ENCODE measurements at regions of chr13 and their contacts with region 1.

Region 1: GRCh38 chr13:74575729-74576125 is 441.5 kb upstream of the KLF12 start:
- DNase-seq: no peak
- ATAC-seq: no peak
- H3K4me3 Mint-ChIP-seq: peak overlapping the region; percentile 49
- H3K27ac Mint-ChIP-seq: no peak overlapping the region
- H3K4me1 Mint-ChIP-seq: peaks cover 5% of the 10 kb centered on the region
- H3K27me3 Mint-ChIP-seq: peaks cover 45% of the 10 kb centered on the region
- CTCF ChIP-seq: no peak

Region 2: DNA sequence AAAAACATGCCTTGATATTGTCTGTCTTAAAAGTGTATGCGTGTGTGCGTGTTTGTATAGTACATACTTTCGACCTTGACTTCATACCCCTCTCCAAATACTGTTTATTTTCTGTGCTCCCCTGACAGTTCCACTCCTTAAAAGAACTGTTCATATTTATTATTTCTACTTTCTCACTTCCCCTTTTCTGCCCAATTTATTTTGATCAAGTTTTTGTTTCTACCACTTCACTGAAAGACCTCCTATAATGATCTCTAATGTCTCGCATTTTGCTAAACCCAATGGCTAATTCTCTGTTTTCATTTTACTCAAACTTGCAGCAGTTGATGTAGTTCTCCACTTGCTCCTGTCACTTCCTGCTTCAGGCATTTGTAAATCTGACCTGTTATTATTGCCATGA is 15.4 kb before region 1 on chr13:
- CTCF ChIA-PET with region 1: no interaction called
- POLR2A ChIA-PET with region 1: no interaction called
- intact Hi-C with region 1: loop called (anchors 2 kb)
- DNase-seq: no peak
- ATAC-seq: no peak
- H3K4me3 Mint-ChIP-seq: no peak overlapping the region
- H3K27ac Mint-ChIP-seq: no peak overlapping the region
- H3K4me1 Mint-ChIP-seq: peaks cover 27% of the 10 kb centered on the region
- H3K27me3 Mint-ChIP-seq: no peaks in the 10 kb centered on the region
- CTCF ChIP-seq: no peak

Region 3: GRCh38 chr13:74661851-74662250 is 86.1 kb after region 1 on chr13:
- CTCF ChIA-PET with region 1: no interaction called
- POLR2A ChIA-PET with region 1: no interaction called
- intact Hi-C with region 1: no loop called
- DNase-seq: no peak
- ATAC-seq: no peak
- H3K4me3 Mint-ChIP-seq: no peak overlapping the region
- H3K27ac Mint-ChIP-seq: no peak overlapping the region
- H3K4me1 Mint-ChIP-seq: no peaks in the 10 kb centered on the region
- H3K27me3 Mint-ChIP-seq: no peaks in the 10 kb centered on the region
- CTCF ChIP-seq: no peak

Region 4: DNA sequence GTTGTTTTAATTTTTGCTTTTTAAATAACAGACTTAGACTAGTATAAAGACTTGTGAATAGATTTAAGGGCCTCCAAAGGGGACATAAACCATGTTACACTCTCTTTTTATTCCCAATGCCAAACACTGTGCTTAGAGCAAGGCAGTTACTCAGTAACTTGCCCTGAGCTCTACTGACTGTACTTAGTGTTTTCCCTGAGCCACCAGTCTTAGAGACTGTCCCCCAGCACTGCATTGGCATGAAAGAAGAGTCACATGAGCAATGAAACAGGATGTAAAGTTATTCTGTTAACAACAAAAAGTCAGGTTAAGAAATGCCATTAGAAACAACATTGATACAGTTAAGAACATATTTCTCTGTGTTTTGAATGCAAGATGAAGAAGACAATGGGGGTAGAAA is 718.4 kb after region 1 on chr13:
- CTCF ChIA-PET with region 1: no interaction called
- POLR2A ChIA-PET with region 1: no interaction called
- intact Hi-C with region 1: no loop called
- DNase-seq: no peak
- ATAC-seq: no peak
- H3K4me3 Mint-ChIP-seq: no peak overlapping the region
- H3K27ac Mint-ChIP-seq: no peak overlapping the region
- H3K4me1 Mint-ChIP-seq: no peaks in the 10 kb centered on the region
- H3K27me3 Mint-ChIP-seq: no peaks in the 10 kb centered on the region
- CTCF ChIP-seq: no peak

Measured in activated B cell treated with CpG ODN at 0.5 μM for 24 hours (primary cell).